Thyroid gland (tissue), 4 donors: ENCODE measurements at regions of chr20 and their contacts with region 1.

Region 1: GRCh38 chr20:62516345-62516744 is 40.5 kb upstream of the GATA5 start:
- DNase-seq: peak; percentile 12 to 14
- H3K4me3 ChIP-seq: no peak overlapping the region
- H3K27ac ChIP-seq: no peak overlapping the region
- H3K4me1 ChIP-seq: no peaks in the 10 kb centered on the region
- H3K27me3 ChIP-seq: no peaks in the 10 kb centered on the region
- CTCF ChIP-seq: no peak
- POLR2A ChIP-seq: no peak

Region 2: GRCh38 chr20:62201173-62202082 is 314.9 kb before region 1 on chr20:
- intact Hi-C with region 1: no loop called
- DNase-seq: no peak
- H3K4me3 ChIP-seq: no peak overlapping the region
- H3K27ac ChIP-seq: no peak overlapping the region
- H3K4me1 ChIP-seq: no peaks in the 10 kb centered on the region
- H3K27me3 ChIP-seq: no peaks in the 10 kb centered on the region
- CTCF ChIP-seq: no peak
- POLR2A ChIP-seq: no peak

Region 3: DNA sequence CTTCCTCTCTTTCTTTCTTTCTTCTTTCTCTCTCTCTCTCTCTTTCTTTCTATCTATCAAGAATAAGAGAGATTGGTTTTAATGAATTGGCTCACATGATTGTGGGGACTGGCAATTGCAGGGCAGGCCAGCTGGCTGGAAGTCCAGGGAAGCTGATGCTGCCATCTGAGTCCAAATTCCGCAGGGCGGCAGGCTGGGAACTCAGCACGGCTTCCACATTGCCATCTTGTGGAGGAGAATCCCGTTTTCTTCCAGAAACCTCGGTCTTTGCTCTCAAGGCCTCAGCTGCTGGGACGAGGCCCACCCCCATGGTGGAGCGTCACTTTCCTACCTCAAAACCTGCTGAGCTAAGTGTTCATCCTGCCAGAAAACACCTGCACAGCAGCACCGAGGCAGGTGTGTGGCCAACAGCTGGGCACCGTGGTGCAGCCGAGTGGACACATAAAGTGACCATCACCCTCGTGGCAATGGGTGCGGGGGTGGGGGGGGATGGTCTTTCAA is 67.1 kb after region 1 on chr20:
- intact Hi-C with region 1: loop called (anchors 5 kb)
- DNase-seq: no peak
- H3K4me3 ChIP-seq: no peak overlapping the region
- H3K27ac ChIP-seq: no peak overlapping the region
- H3K4me1 ChIP-seq: no peaks in the 10 kb centered on the region
- H3K27me3 ChIP-seq: peaks cover 4% of the 10 kb centered on the region
- CTCF ChIP-seq: no peak
- POLR2A ChIP-seq: no peak